ENCODE measurements at regions of chr14 and their contacts with region 1.

Region 1: GRCh38 chr14:68955164-68955921 is 23.8 kb downstream of the ACTN1 start:
- DNase-seq: peak in 1 of 2 donors; percentile 63
- ATAC-seq: peak; percentile 49
- H3K4me3 ChIP-seq: no peak overlapping the region
- H3K27ac ChIP-seq: peak overlapping the region; percentile 37 to 53
- H3K4me1 ChIP-seq: peaks cover 6 to 7% of the 10 kb centered on the region in 2 donors
- H3K27me3 ChIP-seq: no peaks in the 10 kb centered on the region

Region 2: GRCh38 chr14:68520637-68521556 is 434.4 kb before region 1 on chr14:
- intact Hi-C with region 1: no loop called
- DNase-seq: no peak
- ATAC-seq: no peak
- H3K4me3 ChIP-seq: no peak overlapping the region
- H3K27ac ChIP-seq: peak overlapping the region in 1 of 2 donors; percentile 50
- H3K4me1 ChIP-seq: peaks cover 4% of the 10 kb centered on the region in 2 donors
- H3K27me3 ChIP-seq: no peaks in the 10 kb centered on the region

Region 3: GRCh38 chr14:68926236-68926635 is 29.1 kb before region 1 on chr14:
- intact Hi-C with region 1: loop called in 1 of 2 experiments (anchors 5 kb)
- DNase-seq: no peak
- ATAC-seq: no peak
- H3K4me3 ChIP-seq: no peak overlapping the region
- H3K27ac ChIP-seq: peak overlapping the region in 1 of 2 donors; percentile 65
- H3K4me1 ChIP-seq: peaks cover 3 to 7% of the 10 kb centered on the region in 2 donors
- H3K27me3 ChIP-seq: no peaks in the 10 kb centered on the region

Region 4: GRCh38 chr14:68939893-68940613 is 15.3 kb before region 1 on chr14:
- intact Hi-C with region 1: loop called in 1 of 2 experiments (anchors 2 kb)
- DNase-seq: peak; percentile 92 to 93
- ATAC-seq: peak; percentile 89
- H3K4me3 ChIP-seq: no peak overlapping the region
- H3K27ac ChIP-seq: peak overlapping the region; percentile 95 to 97
- H3K4me1 ChIP-seq: peaks cover 4 to 7% of the 10 kb centered on the region in 2 donors
- H3K27me3 ChIP-seq: no peaks in the 10 kb centered on the region

Region 5: GRCh38 chr14:69855180-69855832 is 900.0 kb after region 1 on chr14:
- intact Hi-C with region 1: no loop called
- DNase-seq: no peak
- ATAC-seq: no peak
- H3K4me3 ChIP-seq: no peak overlapping the region
- H3K27ac ChIP-seq: no peak overlapping the region
- H3K4me1 ChIP-seq: no peaks in the 10 kb centered on the region
- H3K27me3 ChIP-seq: peaks cover 0 to 2% of the 10 kb centered on the region in 2 donors